ENCODE measurements at regions of chr17 and their contacts with region 1.

Region 1: GRCh38 chr17:7444682-7445618 is at the start of gene CHRNB1:
- H3K4me3 ChIP-seq: peak within 1 kb of the TSS; percentile 57
- H3K27ac ChIP-seq: no peak within 1 kb of the TSS; the same call in 1 of the 2 replicates
- H3K4me1 ChIP-seq: peaks cover 19% of the 10 kb centered on the region
- CTCF ChIP-seq: peak; percentile 64

Region 2: DNA sequence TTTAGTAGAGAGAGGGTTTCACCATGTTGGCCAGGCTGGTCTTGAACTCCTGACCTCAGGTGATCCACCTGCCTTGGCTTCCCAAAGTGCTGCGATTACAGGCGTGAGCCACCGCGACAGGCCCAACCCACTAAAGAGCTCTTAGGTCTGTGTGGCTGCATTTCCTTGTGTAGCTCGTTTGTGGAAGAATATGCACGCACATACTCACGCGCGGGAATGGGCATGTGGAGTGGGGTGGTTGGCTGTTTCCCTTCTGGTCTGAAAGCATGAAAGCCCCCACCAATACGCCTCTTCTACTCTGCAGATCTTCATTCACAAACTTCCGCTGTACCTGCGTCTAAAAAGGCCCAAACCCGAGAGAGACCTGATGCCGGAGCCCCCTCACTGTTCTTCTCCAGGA is 10.0 kb after region 1 on chr17:
- CTCF ChIA-PET with region 1: interaction called, 5 read pairs
- POLR2A ChIA-PET with region 1: interaction called, 17 read pairs
- H3K4me3 ChIP-seq: no peak overlapping the region
- H3K27ac ChIP-seq: no peak overlapping the region
- H3K4me1 ChIP-seq: no peaks in the 10 kb centered on the region
- CTCF ChIP-seq: no peak

Region 3: DNA sequence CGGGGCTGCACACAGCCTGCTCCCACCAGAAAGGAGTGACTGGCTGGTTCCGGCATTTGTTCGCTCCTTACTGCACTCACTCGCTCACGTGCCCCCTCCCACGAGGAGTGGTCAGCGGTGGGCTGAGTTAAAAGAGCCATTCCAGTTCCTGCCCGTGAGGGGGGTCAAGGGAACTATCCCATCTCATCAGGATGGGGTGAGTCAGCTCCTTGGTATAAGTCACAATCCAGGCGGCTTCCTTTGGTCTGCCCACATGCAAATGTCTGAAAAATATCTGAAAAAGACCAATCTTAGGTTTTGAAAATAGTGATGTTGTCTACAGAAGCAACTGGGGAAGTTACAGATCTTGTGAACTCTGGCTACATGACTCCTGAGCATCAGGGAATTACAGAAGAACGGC is 93.9 kb after region 1 on chr17:
- CTCF ChIA-PET with region 1: no interaction called
- POLR2A ChIA-PET with region 1: no interaction called
- H3K4me3 ChIP-seq: no peak overlapping the region
- H3K27ac ChIP-seq: no peak overlapping the region
- H3K4me1 ChIP-seq: no peaks in the 10 kb centered on the region
- CTCF ChIP-seq: no peak